ENCODE measurements at regions of chr6 and their contacts with region 1.

Region 1: GRCh38 chr6:39812853-39813533 is 20.8 kb downstream of the DAAM2 start:
- DNase-seq: peak; percentile 33
- H3K4me3 ChIP-seq: no peak overlapping the region
- H3K27ac ChIP-seq: peak overlapping the region; percentile 47 to 64
- H3K4me1 ChIP-seq: peaks cover 36% of the 10 kb centered on the region
- H3K27me3 ChIP-seq: no peaks in the 10 kb centered on the region
- CTCF ChIP-seq: no peak
- POLR2A ChIP-seq: no peak

Region 2: DNA sequence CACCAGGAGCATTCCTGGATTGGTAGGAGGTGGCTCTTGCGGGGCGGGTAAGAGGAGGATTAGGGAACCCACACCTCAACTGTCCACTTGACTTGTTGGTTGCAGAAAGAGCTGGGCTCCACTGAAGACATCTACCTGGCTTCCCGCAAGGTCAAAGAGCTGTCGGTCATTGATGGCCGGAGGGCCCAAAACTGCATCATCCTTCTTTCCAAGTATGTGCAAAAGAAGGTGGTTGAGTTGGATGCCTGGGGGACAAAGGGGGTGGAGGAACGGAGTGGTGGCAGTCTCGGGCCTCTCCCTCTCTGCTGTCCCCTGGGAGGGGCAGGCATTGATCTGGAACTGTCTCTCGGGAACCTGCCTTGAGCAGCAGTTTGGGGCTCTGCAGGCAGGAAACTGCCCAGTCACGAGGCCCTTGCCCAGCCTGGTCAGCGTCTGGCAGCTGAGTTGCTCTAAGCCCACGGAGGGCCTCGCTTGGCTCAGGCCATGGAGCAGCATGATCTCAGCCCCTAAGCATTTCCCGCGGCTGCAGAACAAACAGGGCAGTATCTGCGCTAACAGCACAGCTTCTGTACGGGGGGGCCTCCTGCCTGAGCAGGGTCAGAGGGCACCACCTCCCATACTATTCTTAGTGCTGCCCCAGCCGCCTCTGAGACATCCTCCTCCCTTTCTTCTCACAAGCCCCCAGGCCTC is 74.5 kb after region 1 on chr6:
- intact Hi-C with region 1: loop called (anchors 10 kb)
- DNase-seq: peak; percentile 80
- H3K4me3 ChIP-seq: no peak overlapping the region
- H3K27ac ChIP-seq: no peak overlapping the region
- H3K4me1 ChIP-seq: peaks cover 11% of the 10 kb centered on the region
- H3K27me3 ChIP-seq: no peaks in the 10 kb centered on the region
- CTCF ChIP-seq: no peak
- POLR2A ChIP-seq: no peak

Measured in testis (tissue), 5 donors.